ENCODE measurements at regions of chr5 and their contacts with region 1.

Region 1: DNA sequence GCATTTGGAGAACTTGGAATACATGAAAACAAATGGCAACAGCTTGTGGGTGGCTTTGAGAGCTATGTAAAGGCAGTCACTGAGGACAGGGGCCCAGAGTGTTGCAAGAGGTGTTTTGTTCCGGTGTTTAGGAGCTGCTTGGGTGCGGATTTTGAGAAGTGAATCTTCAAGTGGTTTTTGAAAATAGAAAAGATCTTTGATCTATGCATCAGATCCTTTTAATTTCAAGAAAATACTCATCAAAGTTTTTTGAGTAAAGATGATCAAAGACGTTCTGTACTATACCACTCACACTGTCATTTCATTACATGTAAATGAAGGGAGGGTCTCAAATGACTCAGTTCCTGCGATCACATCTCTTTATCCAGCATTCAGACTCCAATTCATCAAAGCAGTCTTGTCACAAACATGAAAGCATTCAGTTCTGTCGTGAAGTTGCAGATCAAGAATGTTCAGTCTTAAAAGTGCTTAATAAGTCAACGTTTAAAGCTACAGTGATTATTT is 112.5 kb downstream of the WDR41 start:
- DNase-seq: peak; percentile 38
- H3K4me3 Mint-ChIP-seq: no peak overlapping the region
- H3K27ac Mint-ChIP-seq: peak overlapping the region; percentile 68
- H3K4me1 Mint-ChIP-seq: peaks cover 34% of the 10 kb centered on the region
- H3K27me3 Mint-ChIP-seq: no peaks in the 10 kb centered on the region

Region 2: DNA sequence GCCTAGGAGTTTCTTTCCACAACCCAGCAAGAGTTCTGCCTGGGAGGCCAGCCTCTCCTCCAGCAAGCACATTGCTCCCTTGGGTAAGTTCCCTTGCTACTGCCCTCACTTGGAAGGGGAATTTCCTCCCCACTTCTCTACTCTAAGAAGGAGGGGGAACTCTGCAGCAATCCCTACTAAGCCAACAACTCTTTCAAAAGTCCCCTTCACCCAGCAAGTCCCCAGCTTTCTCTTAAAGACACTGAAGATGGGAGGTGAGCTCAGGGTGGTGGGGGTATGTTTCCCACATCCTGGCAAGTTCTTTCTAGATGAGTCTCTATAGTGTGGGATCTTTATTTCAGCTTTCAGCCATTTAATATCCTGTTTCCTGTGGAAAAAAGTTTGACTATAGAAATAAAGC is 120.1 kb before region 1 on chr5:
- intact Hi-C with region 1: loop called (anchors 1 kb)
- DNase-seq: no peak
- H3K4me3 Mint-ChIP-seq: no peak overlapping the region
- H3K27ac Mint-ChIP-seq: no peak overlapping the region
- H3K4me1 Mint-ChIP-seq: peaks cover 11% of the 10 kb centered on the region
- H3K27me3 Mint-ChIP-seq: peaks cover 13% of the 10 kb centered on the region

Region 3: DNA sequence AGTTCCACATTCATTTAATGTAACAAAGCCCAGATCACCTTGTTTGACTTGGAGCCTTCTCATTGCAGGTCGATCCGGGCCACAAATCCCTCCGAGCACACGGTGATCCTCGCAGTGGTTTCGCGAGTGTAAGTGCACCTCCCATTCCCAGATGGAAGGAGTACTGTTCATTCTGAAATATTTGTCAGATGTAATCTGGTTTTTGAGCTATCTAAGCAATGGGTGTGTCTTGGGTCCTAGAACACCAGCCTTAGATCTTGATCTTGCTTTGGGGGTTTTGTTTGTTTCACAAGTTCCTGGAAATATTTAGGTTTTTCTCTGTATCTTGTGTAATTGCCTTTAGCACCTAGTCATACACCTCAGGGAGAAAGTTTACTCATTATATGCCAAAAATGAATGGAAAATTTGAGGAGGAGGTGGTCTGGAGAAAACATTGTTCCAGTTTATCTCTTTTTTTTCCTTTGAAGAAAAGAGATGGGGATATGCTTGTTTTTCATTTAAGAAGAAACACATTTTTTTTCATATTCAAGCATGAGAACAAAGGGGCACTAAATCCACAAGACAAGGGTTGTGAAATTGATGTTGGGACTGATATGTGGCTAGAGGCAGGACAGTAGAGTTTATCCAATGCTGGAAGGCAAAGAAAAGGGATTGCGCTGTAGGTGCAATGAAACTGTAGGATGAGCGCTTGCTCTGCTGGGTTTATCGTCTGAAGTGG is 50.5 kb before region 1 on chr5:
- intact Hi-C with region 1: loop called (anchors 1 kb)
- DNase-seq: no peak
- H3K4me3 Mint-ChIP-seq: peak overlapping the region; percentile 34
- H3K27ac Mint-ChIP-seq: peak overlapping the region; percentile 84
- H3K4me1 Mint-ChIP-seq: peaks cover 40% of the 10 kb centered on the region
- H3K27me3 Mint-ChIP-seq: peaks cover 5% of the 10 kb centered on the region

Region 4: DNA sequence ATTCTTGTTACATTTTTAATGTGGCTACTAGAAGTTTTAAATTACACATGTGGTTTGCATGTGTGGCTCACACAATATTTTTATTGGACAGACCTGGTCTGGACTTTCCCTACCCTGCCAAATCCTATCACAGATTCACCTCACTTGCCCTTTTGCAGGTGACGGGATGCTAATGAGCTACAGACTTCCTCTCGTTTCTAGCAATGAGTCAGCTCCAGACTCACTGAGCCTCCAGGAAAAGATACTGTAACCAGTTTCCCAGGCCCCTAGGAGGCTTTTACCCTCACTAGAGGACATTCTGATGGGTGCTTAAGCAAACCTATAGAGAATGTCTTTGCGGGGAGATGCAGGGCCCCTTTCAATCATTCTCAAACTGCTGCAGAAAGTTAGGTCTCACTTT is 22.9 kb before region 1 on chr5:
- intact Hi-C with region 1: loop called (anchors 1 kb)
- DNase-seq: peak; percentile 27
- H3K4me3 Mint-ChIP-seq: no peak overlapping the region
- H3K27ac Mint-ChIP-seq: peak overlapping the region; percentile 16
- H3K4me1 Mint-ChIP-seq: peaks cover 26% of the 10 kb centered on the region
- H3K27me3 Mint-ChIP-seq: no peaks in the 10 kb centered on the region

Region 5: GRCh38 chr5:77431286-77431685 is 51.7 kb after region 1 on chr5:
- intact Hi-C with region 1: loop called (anchors 5 kb)
- DNase-seq: no peak
- H3K4me3 Mint-ChIP-seq: no peak overlapping the region
- H3K27ac Mint-ChIP-seq: no peak overlapping the region
- H3K4me1 Mint-ChIP-seq: peaks cover 14% of the 10 kb centered on the region
- H3K27me3 Mint-ChIP-seq: no peaks in the 10 kb centered on the region

Region 6: GRCh38 chr5:78182790-78183189 is 803.2 kb after region 1 on chr5:
- intact Hi-C with region 1: no loop called
- DNase-seq: no peak
- H3K4me3 Mint-ChIP-seq: no peak overlapping the region
- H3K27ac Mint-ChIP-seq: no peak overlapping the region
- H3K4me1 Mint-ChIP-seq: peaks cover 2% of the 10 kb centered on the region
- H3K27me3 Mint-ChIP-seq: no peaks in the 10 kb centered on the region

Measured in activated T-helper 2 cell treated with anti-CD3 and anti-CD28 coated beads, Interferon-gamma antibody, Interleukin-2, Interleukin-4, amounts not matched to agents 10 μg/mL and 5 μg/mL and 100 μg/mL, durations not matched to agents 14 hours and 24 hours and 36 hours (primary cell).